HEK293T (cell line): ENCODE measurements at regions of chr22 and their contacts with region 1.

Region 1: GRCh38 chr22:19122143-19122751 is at the start of gene DGCR2:
- DNase-seq: peak; percentile 100

Region 2: GRCh38 chr22:19016081-19016766 is 106.0 kb before region 1 on chr22:
- CTCF ChIA-PET with region 1: no interaction called
- POLR2A ChIA-PET with region 1: no interaction called
- DNase-seq: no peak

Region 3: DNA sequence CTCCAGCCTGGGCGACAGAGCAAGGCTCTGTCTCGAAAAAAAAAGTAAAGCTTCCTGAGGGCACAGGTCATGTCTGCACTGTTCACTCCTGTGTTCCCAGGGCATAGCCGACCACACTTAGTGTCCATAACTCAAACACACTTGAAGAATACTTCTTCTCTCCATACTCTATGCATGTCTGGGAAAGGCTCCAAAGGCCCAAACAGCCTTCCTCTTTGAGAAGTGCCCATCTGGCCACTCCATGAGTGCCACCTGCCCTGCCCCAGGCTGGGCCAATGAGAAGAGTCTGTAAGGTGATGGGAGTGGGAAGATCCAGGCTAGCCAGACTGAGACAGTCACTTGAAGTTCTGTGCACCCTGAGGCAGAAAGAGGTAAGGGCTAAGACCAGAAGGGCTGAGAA is 24.7 kb before region 1 on chr22:
- CTCF ChIA-PET with region 1: no interaction called
- POLR2A ChIA-PET with region 1: interaction called, 11 read pairs
- DNase-seq: no peak

Region 4: GRCh38 chr22:19218541-19219233 is 96.4 kb after region 1 on chr22:
- CTCF ChIA-PET with region 1: no interaction called
- POLR2A ChIA-PET with region 1: no interaction called
- DNase-seq: no peak